ENCODE measurements at regions of chr21 and their contacts with region 1.

Region 1: GRCh38 chr21:42440187-42440792 is 36.6 kb downstream of the UBASH3A start:
- DNase-seq: peak; percentile 89
- CTCF ChIP-seq: no peak

Region 2: GRCh38 chr21:42156690-42157577 is 283.4 kb before region 1 on chr21:
- in situ Hi-C with region 1: loop called (anchors 10 kb)
- DNase-seq: no peak
- CTCF ChIP-seq: no peak

Measured in GM13976 (cell line).